A549 (cell line): ENCODE measurements at regions of chr16 and their contacts with region 1.

Region 1: DNA sequence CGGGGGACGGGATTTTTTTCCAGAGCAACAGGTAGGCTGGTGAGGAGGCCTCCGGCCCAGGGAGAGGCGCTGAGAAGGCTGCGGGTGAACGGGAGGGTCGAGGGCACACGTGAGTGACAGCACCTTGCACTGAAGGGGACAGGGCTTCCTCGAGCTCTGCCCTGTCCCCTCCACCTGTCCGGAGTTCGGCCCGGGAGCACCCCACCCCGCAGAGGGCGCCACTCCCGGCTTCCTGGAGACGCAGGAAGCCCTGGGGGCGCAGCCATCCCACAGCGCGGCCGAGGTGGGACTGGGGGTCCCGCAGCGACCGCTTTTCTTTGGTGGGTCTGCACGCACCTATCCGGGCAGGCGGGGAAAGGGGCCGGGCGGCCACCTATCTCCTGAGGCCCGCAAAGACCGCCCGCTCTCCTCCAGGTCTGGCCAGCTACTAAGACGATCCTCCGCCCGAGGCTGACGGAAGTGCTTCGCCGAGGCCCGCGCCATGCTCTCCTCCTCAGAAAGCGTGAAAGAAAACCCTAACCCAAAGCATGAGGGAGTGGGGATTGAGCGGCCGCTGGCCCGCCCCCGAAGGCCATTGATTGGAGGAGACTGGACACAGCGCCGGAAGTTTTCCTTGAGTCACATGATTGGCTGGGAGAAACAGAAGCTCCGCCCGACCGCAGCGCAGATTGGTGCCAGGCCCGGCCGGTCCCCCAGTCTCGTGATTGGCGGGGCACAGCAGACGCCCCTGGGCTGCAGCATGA is 34.3 kb downstream of the DDX19A start:
- DNase-seq: peak; percentile 92 to 97
- ATAC-seq: peak; percentile 84 to 94
- H3K4me3 ChIP-seq: peak overlapping the region; percentile 66
- H3K27ac ChIP-seq: peak overlapping the region; percentile 94 to 96
- H3K4me1 ChIP-seq: peaks cover 14% of the 10 kb centered on the region
- CTCF ChIP-seq: peak; percentile 40; the same call in 2 of the 3 replicates
- EP300 ChIP-seq: no peak
- POLR2A ChIP-seq: peak; percentile 84
- RAD21 ChIP-seq: peak; percentile 3 to 52; a peak in 3 of 5 replicates

Region 2: GRCh38 chr16:70162041-70162451 is 219.0 kb before region 1 on chr16:
- CTCF ChIA-PET with region 1: no interaction called
- POLR2A ChIA-PET with region 1: no interaction called
- DNase-seq: peak; percentile 64 to 66
- ATAC-seq: peak; percentile 60 to 67; a peak in 5 of 6 replicates
- H3K4me3 ChIP-seq: no peak overlapping the region
- H3K27ac ChIP-seq: peak overlapping the region; percentile 21 to 30; a peak in 2 of 6 replicates
- H3K4me1 ChIP-seq: peaks cover 16% of the 10 kb centered on the region
- CTCF ChIP-seq: no peak
- EP300 ChIP-seq: no peak
- POLR2A ChIP-seq: no peak
- RAD21 ChIP-seq: no peak

Region 3: DNA sequence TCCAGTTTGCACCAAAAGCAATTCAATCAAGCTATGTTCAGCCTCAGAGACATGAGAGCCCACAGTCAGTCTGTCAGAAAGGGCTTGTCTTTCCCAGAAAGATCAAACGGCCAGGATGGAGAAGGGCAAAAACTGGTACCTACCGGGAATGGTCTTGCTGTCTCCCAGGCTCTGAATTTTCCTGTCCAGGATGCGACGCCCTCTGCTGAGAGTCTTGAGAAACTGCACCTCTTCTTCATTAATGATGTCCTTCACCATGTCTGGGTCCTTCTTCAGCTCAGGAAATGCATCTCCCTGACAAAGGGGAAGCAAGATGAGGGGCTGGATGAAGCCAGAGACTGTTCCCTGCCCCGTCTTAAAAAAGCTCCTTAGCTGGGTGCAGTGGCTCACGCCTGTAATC is 113.5 kb before region 1 on chr16:
- CTCF ChIA-PET with region 1: no interaction called
- POLR2A ChIA-PET with region 1: no interaction called
- DNase-seq: peak; percentile 66 to 67
- ATAC-seq: peak; percentile 85 to 88; a peak in 5 of 6 replicates
- H3K4me3 ChIP-seq: no peak overlapping the region
- H3K27ac ChIP-seq: no peak overlapping the region
- H3K4me1 ChIP-seq: no peaks in the 10 kb centered on the region
- CTCF ChIP-seq: peak; percentile 40; the same call in 2 of the 3 replicates
- EP300 ChIP-seq: no peak
- POLR2A ChIP-seq: no peak
- RAD21 ChIP-seq: peak in 1 of 2 experiments; percentile 37; a peak in 2 of 5 replicates

Region 4: GRCh38 chr16:70345840-70346239 is 35.2 kb before region 1 on chr16:
- CTCF ChIA-PET with region 1: no interaction called
- POLR2A ChIA-PET with region 1: interaction called, 10 read pairs
- DNase-seq: no peak
- ATAC-seq: no peak
- H3K4me3 ChIP-seq: peak overlapping the region; percentile 81
- H3K27ac ChIP-seq: peak overlapping the region; percentile 90 to 91
- H3K4me1 ChIP-seq: peaks cover 11% of the 10 kb centered on the region; the same call in 2 of the 3 replicates
- CTCF ChIP-seq: no peak
- EP300 ChIP-seq: no peak
- POLR2A ChIP-seq: no peak
- RAD21 ChIP-seq: no peak

Region 5: DNA sequence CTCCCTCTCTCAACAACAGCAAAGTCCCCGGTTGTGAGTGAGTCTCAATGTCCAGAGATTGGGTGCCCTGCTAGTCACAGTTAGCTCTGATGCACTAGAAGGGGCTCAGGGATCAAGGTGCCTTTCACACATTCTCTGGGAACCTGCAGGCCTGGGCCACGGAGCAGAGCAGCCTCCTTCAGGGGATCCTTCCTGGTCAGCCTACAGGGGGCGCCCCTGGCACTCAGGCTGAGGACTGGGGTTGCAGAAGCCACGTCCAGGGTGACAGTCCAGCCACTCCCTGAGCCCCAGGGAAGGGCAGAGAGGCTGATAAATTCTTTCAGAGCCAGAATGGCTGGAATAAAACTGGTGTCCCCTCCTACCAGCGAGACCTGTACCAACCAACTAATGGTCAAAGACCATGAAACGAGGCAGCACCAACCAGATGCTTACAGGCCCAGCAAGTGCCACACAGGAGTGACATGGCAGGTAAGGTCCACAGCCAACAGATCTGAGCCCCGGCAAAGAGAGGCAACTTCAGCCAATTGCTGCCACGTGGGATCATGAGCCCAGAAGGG is 14.4 kb after region 1 on chr16:
- CTCF ChIA-PET with region 1: interaction called, 33 read pairs
- POLR2A ChIA-PET with region 1: interaction called, 13 read pairs
- DNase-seq: peak; percentile 65 to 75
- ATAC-seq: peak; percentile 78 to 93
- H3K4me3 ChIP-seq: no peak overlapping the region
- H3K27ac ChIP-seq: 0 out of 6 replicates have a peak overlapping the region, but pooled peaks have one; percentile 3 to 27
- H3K4me1 ChIP-seq: peaks cover 17% of the 10 kb centered on the region
- CTCF ChIP-seq: peak; percentile 75
- EP300 ChIP-seq: no peak
- POLR2A ChIP-seq: no peak
- RAD21 ChIP-seq: peak; percentile 85 to 88

Region 6: GRCh38 chr16:70438969-70439862 is 58.2 kb after region 1 on chr16 and contains the start of gene ST3GAL2:
- CTCF ChIA-PET with region 1: interaction called, 8 read pairs
- POLR2A ChIA-PET with region 1: interaction called, 20 read pairs
- DNase-seq: peak; percentile 93
- ATAC-seq: peak; percentile 95 to 96
- H3K4me3 ChIP-seq: peak within 1 kb of the TSS; percentile 69
- H3K27ac ChIP-seq: peak within 1 kb of the TSS; percentile 92 to 98
- H3K4me1 ChIP-seq: peaks cover 39% of the 10 kb centered on the region
- CTCF ChIP-seq: no peak; the same call in 2 of the 3 replicates
- EP300 ChIP-seq: no peak
- POLR2A ChIP-seq: peak; percentile 16; the same call in 1 of the 2 replicates
- RAD21 ChIP-seq: no peak
- polyA plus RNA-seq, gene ST3GAL2: 11.1 and 14.4 TPM in 2 replicates

Region 7: DNA sequence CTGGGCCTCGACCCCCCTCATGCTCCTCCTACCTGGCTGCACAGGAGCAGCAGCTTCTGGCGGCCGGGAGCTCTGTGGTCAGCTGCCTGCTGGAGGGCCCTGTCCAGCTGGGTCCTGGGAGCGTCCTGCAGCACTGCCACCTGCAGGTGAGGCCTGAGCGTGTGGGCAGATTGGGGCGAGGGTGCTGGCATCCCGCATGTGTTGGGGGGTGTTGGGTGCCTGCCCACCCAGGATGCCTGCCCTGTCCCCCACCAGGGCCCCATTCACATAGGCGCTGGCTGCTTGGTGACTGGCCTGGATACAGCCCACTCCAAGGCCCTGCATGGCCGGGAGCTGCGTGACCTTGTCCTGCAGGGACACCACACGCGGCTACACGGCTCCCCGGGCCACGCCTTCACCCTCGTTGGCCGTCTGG is 89.9 kb after region 1 on chr16:
- CTCF ChIA-PET with region 1: interaction called, 35 read pairs
- POLR2A ChIA-PET with region 1: interaction called, 6 read pairs
- DNase-seq: peak; percentile 65 to 66
- ATAC-seq: peak; percentile 81 to 88
- H3K4me3 ChIP-seq: no peak overlapping the region
- H3K27ac ChIP-seq: peak overlapping the region in 1 of 2 experiments; percentile 30; a peak in 2 of 6 replicates
- H3K4me1 ChIP-seq: peaks cover 5% of the 10 kb centered on the region; the same call in 1 of the 3 replicates
- CTCF ChIP-seq: peak; percentile 55
- EP300 ChIP-seq: no peak
- POLR2A ChIP-seq: no peak
- RAD21 ChIP-seq: peak; percentile 74 to 77

Region 8: GRCh38 chr16:70589998-70590471 is 209.0 kb after region 1 on chr16:
- CTCF ChIA-PET with region 1: no interaction called
- POLR2A ChIA-PET with region 1: no interaction called
- DNase-seq: peak; percentile 43 to 57
- ATAC-seq: peak; percentile 48 to 74; a peak in 4 of 6 replicates
- H3K4me3 ChIP-seq: no peak overlapping the region
- H3K27ac ChIP-seq: peak overlapping the region in 1 of 2 experiments; percentile 67; a peak in 3 of 6 replicates
- H3K4me1 ChIP-seq: peaks cover 14% of the 10 kb centered on the region
- CTCF ChIP-seq: no peak
- EP300 ChIP-seq: no peak
- POLR2A ChIP-seq: no peak
- RAD21 ChIP-seq: no peak

Region 9: DNA sequence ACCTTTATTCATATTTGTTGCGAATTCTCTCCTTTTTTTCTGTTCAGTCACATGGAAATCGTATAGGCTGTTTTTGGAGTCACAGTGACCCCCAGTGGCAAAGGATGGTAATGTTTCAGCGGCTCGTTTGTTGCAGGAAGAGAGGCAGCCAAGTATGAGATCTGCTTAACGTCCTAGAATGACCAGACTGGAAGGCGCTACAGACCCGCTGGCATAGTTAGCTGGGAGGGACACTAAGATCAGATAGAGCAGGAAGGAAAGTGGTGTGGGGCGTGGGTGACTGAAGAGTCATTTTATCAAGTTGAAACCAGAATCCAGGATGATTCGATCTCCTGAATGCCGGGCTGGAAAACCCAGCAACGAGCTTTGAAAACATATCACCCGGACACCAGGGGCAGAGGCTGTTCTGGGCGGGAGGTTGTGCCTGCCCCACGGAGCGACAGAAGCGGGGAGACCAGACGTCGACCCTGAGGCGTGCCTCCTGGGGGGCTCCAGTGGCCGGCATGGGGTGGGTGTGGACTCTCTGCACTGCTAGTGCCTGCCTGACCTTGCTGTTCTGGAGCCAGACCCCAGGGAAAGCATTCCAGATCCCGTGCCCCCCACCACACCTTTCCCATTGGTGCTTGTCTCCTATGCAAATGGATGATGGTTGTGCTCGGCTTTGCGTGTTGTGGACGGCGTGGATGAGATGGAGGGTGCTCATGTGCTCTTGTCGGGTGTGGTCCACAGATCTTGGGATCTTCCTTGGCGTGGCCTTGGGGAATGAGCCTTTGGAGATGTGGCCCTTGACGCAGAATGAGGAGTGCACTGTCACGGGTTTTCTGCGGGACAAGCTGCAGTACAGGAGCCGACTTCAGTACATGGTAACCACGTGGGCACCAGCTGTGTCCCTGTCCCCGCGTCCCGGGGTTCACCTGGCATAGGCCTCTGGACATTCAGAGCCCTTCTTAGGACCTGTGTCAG is 273.1 kb after region 1 on chr16:
- CTCF ChIA-PET with region 1: interaction called, 19 read pairs
- POLR2A ChIA-PET with region 1: interaction called, 9 read pairs
- DNase-seq: peak; percentile 41 to 78
- ATAC-seq: peak; percentile 80 to 85
- H3K4me3 ChIP-seq: peak overlapping the region; percentile 29; the same call in 2 of the 3 replicates
- H3K27ac ChIP-seq: peak overlapping the region; percentile 57 to 73; a peak in 5 of 6 replicates
- H3K4me1 ChIP-seq: no peaks in the 10 kb centered on the region; the same call in 2 of the 3 replicates
- CTCF ChIP-seq: peak; percentile 94
- EP300 ChIP-seq: no peak
- POLR2A ChIP-seq: no peak
- RAD21 ChIP-seq: peak; percentile 92 to 97

Region 10: GRCh38 chr16:72051818-72052217 is 1670.8 kb after region 1 on chr16:
- CTCF ChIA-PET with region 1: no interaction called
- POLR2A ChIA-PET with region 1: no interaction called
- DNase-seq: no peak
- ATAC-seq: no peak
- H3K4me3 ChIP-seq: no peak overlapping the region
- H3K27ac ChIP-seq: no peak overlapping the region
- H3K4me1 ChIP-seq: no peaks in the 10 kb centered on the region
- CTCF ChIP-seq: no peak
- EP300 ChIP-seq: no peak
- POLR2A ChIP-seq: no peak
- RAD21 ChIP-seq: no peak